Breast epithelium (tissue), 4 donors: ENCODE measurements at regions of chr12 and their contacts with region 1.

Region 1: DNA sequence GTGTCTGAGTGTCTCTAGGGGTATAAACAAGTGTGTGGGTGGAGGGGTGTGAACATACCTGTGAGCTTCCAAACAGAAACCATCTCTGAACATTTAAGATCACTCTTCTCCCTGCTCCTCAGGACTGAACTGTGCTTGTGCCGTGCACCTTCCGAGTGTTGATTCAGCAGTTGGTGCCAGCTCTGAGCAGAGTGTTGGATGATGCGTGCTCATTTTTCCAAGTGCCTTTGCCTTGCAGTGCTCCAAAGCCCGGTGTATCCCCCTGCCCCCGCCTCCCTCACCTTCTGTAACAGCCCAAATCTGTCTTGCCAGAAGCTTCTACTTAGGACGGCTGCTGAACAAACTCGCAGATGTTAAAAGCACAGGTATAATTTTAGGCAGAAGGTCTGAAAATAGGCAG is 4.4 kb downstream of the WSCD2 start:
- DNase-seq: no peak
- H3K4me3 ChIP-seq: no peak overlapping the region
- H3K27ac ChIP-seq: no peak overlapping the region
- H3K4me1 ChIP-seq: peaks cover 0 to 7% of the 10 kb centered on the region in 2 donors
- H3K27me3 ChIP-seq: peaks cover 0 to 43% of the 10 kb centered on the region in 2 donors
- CTCF ChIP-seq: no peak
- POLR2A ChIP-seq: no peak

Region 2: DNA sequence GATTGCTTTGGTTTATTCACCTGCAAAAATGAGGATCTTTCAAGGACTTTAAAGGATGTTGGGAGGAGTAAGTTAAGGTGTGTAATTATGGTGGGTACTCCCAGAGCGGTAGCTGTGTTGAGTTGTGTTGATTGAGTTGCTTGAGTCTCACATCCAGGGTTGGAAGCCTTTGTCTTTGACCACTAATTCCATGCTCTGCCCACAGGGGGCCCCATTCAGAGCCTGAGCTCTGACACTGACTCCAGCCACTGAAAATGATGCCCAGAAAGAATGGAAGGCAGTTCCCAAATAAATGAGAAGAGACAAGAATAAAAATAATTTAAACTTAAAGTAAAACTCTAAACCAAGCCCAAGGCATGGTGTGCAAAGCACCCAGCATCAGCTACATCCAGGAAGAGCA is 685.3 kb before region 1 on chr12:
- intact Hi-C with region 1: loop called (anchors 5 kb)
- DNase-seq: no peak
- H3K4me3 ChIP-seq: no peak overlapping the region
- H3K27ac ChIP-seq: no peak overlapping the region
- H3K4me1 ChIP-seq: no peaks in the 10 kb centered on the region
- H3K27me3 ChIP-seq: no peaks in the 10 kb centered on the region
- CTCF ChIP-seq: no peak
- POLR2A ChIP-seq: no peak

Region 3: GRCh38 chr12:107684990-107685359 is 448.5 kb before region 1 on chr12:
- intact Hi-C with region 1: loop called (anchors 5 kb)
- DNase-seq: no peak
- H3K4me3 ChIP-seq: peak overlapping the region; percentile 92 to 95 (median 92)
- H3K27ac ChIP-seq: peak overlapping the region; percentile 82 to 85
- H3K4me1 ChIP-seq: no peaks in the 10 kb centered on the region
- H3K27me3 ChIP-seq: no peaks in the 10 kb centered on the region
- CTCF ChIP-seq: no peak
- POLR2A ChIP-seq: no peak

Region 4: GRCh38 chr12:108029051-108029835 is 104.2 kb before region 1 on chr12:
- intact Hi-C with region 1: no loop called
- DNase-seq: no peak
- H3K4me3 ChIP-seq: no peak overlapping the region
- H3K27ac ChIP-seq: no peak overlapping the region
- H3K4me1 ChIP-seq: no peaks in the 10 kb centered on the region
- H3K27me3 ChIP-seq: peaks cover 0 to 9% of the 10 kb centered on the region in 2 donors
- CTCF ChIP-seq: no peak
- POLR2A ChIP-seq: no peak

Region 5: DNA sequence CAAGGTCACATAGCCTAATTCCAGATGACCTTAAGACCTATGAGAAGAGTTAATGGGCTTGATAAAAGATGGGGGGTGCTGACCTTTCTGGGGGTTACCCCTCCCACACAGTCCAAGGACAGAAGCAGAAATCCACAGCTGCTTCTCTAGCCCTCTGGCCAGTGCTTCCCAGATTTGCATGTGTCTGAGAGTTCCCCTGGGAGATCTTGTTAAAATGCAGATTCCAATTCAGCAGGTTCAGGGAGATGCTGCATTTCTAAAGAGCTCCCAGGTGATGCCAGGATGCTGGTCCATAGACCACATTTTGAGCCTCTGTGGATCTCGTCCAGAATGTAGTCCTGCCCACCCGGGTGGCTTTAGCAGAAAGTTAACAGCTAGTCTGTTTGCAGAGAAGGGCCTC is 77.7 kb after region 1 on chr12:
- intact Hi-C with region 1: no loop called
- DNase-seq: no peak
- H3K4me3 ChIP-seq: no peak overlapping the region
- H3K27ac ChIP-seq: no peak overlapping the region
- H3K4me1 ChIP-seq: no peaks in the 10 kb centered on the region
- H3K27me3 ChIP-seq: peaks cover 0 to 6% of the 10 kb centered on the region in 2 donors
- CTCF ChIP-seq: no peak
- POLR2A ChIP-seq: no peak

Region 6: GRCh38 chr12:108442067-108442466 is 308.6 kb after region 1 on chr12:
- intact Hi-C with region 1: no loop called
- DNase-seq: peak in 1 of 2 donors; percentile 53
- H3K4me3 ChIP-seq: no peak overlapping the region
- H3K27ac ChIP-seq: no peak overlapping the region
- H3K4me1 ChIP-seq: no peaks in the 10 kb centered on the region
- H3K27me3 ChIP-seq: no peaks in the 10 kb centered on the region
- CTCF ChIP-seq: no peak
- POLR2A ChIP-seq: no peak